ENCODE measurements at regions of chr19 and their contacts with region 1.

Region 1: GRCh38 chr19:47781587-47782262 is 3.2 kb downstream of the SELENOW start:
- DNase-seq: no peak
- ATAC-seq: no peak
- H3K4me3 Mint-ChIP-seq: no peak overlapping the region
- H3K27ac Mint-ChIP-seq: peak overlapping the region; percentile 13
- H3K4me1 Mint-ChIP-seq: peaks cover 28% of the 10 kb centered on the region
- H3K27me3 Mint-ChIP-seq: no peaks in the 10 kb centered on the region
- CTCF ChIP-seq: no peak

Region 2: DNA sequence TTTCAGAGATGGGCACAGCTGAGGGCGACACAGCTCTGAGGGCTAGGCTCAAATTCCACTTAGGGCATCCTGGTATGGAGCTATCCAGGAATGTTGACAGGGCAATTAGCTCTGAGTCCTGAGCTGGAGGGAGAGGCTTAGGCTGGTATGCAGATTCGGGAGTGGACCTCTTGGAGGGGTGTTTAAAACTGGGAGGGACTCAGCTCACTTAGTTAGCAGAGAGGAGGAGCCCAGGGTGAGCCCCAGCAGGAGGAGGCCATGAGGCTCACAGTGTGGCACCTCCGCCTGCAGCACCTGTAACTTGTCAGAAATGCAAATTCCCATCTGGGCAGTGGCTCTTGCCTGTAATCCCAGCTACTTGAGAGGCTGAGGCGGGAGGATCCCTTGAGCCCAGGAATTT is 46.6 kb before region 1 on chr19:
- CTCF ChIA-PET with region 1: no interaction called
- POLR2A ChIA-PET with region 1: no interaction called
- intact Hi-C with region 1: no loop called
- DNase-seq: no peak
- ATAC-seq: no peak
- H3K4me3 Mint-ChIP-seq: no peak overlapping the region
- H3K27ac Mint-ChIP-seq: no peak overlapping the region
- H3K4me1 Mint-ChIP-seq: peaks cover 5% of the 10 kb centered on the region
- H3K27me3 Mint-ChIP-seq: peaks cover 14% of the 10 kb centered on the region
- CTCF ChIP-seq: no peak

Region 3: GRCh38 chr19:47765523-47766358 is 16.0 kb before region 1 on chr19:
- CTCF ChIA-PET with region 1: interaction called, 12 read pairs
- POLR2A ChIA-PET with region 1: interaction called, 3 read pairs
- intact Hi-C with region 1: no loop called
- DNase-seq: peak; percentile 61
- ATAC-seq: peak; percentile 69
- H3K4me3 Mint-ChIP-seq: no peak overlapping the region
- H3K27ac Mint-ChIP-seq: no peak overlapping the region
- H3K4me1 Mint-ChIP-seq: peaks cover 3% of the 10 kb centered on the region
- H3K27me3 Mint-ChIP-seq: no peaks in the 10 kb centered on the region
- CTCF ChIP-seq: peak; percentile 54

Measured in activated CD8-positive, alpha-beta T cell treated with anti-CD3 and anti-CD28 coated beads for 36 hours (primary cell).